ENCODE measurements at regions of chr15 and their contacts with region 1.

Region 1: DNA sequence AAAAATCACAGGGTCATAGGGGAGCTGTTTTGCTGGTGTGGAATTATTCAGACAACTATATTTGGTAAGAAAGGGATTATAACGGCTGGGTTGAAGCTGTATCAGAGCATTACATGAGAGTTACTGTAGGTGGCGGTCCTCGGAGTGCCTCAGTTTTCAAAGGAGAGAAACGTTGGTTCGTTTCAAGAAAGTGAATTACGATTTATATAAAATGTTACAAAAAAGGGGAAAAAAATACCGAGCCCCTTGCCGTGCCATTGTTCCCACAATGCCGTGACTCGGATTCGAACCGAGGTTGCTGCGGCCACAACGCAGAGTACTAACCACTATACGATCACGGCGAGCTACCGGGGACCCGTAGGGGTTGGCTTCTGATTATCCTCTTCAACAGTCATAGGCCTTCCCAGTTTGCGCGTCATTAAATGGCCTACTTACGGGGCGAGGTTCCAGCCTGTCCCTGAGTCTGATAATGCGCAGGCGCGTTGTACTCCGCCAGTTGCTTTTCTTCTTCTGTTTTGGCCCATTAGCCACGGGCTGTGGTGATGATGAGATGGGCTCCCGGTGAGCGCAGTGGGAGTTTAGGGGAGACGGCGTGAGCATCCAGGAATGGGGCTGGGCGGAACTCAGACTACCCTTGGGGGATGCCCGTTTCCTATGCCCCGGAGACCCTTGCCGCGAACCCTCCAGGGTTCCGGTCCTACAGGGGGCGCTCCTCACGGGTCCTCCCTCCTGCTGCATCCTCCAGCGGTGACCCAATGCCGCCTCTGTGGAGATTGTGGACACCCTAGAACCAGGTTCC is 10.8 kb upstream of the SHF start:
- DNase-seq: peak; percentile 98
- H3K4me3 Mint-ChIP-seq: no peak overlapping the region
- H3K27ac Mint-ChIP-seq: no peak overlapping the region
- H3K4me1 Mint-ChIP-seq: peaks cover 8% of the 10 kb centered on the region
- H3K27me3 Mint-ChIP-seq: no peaks in the 10 kb centered on the region
- CTCF ChIP-seq: peak; percentile 79

Region 2: GRCh38 chr15:45187894-45188830 is 10.4 kb before region 1 on chr15 and contains the start of gene SHF:
- CTCF ChIA-PET with region 1: interaction called, 4 read pairs
- POLR2A ChIA-PET with region 1: interaction called, 13 read pairs
- intact Hi-C with region 1: no loop called
- DNase-seq: no peak
- H3K4me3 Mint-ChIP-seq: peak within 1 kb of the TSS; percentile 76
- H3K27ac Mint-ChIP-seq: peak within 1 kb of the TSS; percentile 54
- H3K4me1 Mint-ChIP-seq: peaks cover 19% of the 10 kb centered on the region
- H3K27me3 Mint-ChIP-seq: no peaks in the 10 kb centered on the region
- CTCF ChIP-seq: no peak
- total RNA-seq, gene SHF: 0.34 and 0.44 TPM in 2 replicates

Measured in MCF 10A (cell line).